ENCODE measurements at regions of chr19 and their contacts with region 1.

Region 1: GRCh38 chr19:8355631-8356402 is 8.1 kb upstream of the ANGPTL4 start:
- DNase-seq: no peak
- H3K4me3 ChIP-seq: no peak overlapping the region
- H3K27ac ChIP-seq: no peak overlapping the region
- H3K4me1 ChIP-seq: peaks cover 0 to 3% (median 0%) of the 10 kb centered on the region in 4 experiments
- H3K27me3 ChIP-seq: peaks cover 0 to 28% (median 3%) of the 10 kb centered on the region in 5 experiments

Region 2: DNA sequence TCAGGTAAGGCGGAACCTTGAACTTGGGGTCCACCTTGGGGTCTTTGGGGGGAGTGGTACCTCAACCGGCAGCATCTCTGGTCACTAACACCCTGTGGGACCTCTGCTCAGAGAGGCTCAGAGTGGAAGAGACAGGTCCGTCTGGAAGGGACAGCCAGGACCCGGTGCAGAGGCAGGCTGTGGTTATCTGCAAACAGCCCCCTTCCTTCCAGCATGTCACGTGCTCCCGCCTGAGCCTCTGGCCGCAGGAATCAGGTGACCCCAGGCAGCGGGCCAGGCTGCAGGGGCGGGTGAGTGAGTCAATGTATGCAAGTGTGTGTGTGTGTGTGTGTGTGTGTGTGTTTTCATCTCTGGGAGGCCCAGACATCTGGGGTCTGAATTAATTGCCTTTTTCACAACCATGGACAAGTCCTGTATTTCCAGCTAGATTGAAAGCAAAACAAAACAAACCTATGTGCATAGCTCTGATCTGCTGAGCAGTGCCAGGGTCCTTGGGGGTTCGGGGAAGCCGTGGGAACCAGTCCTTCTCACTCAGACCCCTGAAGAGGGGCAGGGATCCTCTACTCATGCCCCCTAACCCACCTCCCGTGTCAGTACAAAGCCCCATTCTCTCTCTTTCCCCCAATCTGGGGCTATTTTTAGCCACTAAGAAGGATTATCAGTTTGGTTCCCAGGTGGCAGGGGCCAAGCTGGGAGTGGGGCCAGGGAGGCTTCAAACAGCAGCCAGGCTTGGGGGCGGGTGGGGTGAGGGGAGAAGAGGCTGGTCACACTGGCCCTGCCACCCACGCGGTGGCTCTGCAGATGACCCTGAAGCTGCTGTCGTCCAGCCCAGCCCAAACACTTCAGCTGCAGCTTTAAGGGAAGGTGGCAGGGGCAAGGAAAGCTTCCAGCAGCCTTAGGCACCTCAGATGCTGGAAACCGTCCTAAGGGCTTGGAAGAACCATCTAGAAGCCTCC is 115.3 kb before region 1 on chr19:
- CTCF ChIA-PET with region 1: no interaction called
- POLR2A ChIA-PET with region 1: no interaction called
- DNase-seq: peak; percentile 96 to 99 (median 98)
- H3K4me3 ChIP-seq: peak overlapping the region in 4 of 7 experiments; percentile 5 to 48 (median 38)
- H3K27ac ChIP-seq: no peak overlapping the region
- H3K4me1 ChIP-seq: peaks cover 0 to 46% (median 38%) of the 10 kb centered on the region in 4 experiments
- H3K27me3 ChIP-seq: no peaks in the 10 kb centered on the region

Region 3: GRCh38 chr19:8342684-8343482 is 12.9 kb before region 1 on chr19 and contains the start of gene KANK3:
- CTCF ChIA-PET with region 1: interaction called, 20 read pairs
- POLR2A ChIA-PET with region 1: no interaction called
- DNase-seq: peak; percentile 93 to 95 (median 95)
- H3K4me3 ChIP-seq: peak within 1 kb of the TSS in 6 of 7 experiments; percentile 23 to 67 (median 53)
- H3K27ac ChIP-seq: no peak within 1 kb of the TSS
- H3K4me1 ChIP-seq: peaks cover 0 to 22% (median 14%) of the 10 kb centered on the region in 4 experiments
- H3K27me3 ChIP-seq: peaks cover 0 to 71% (median 17%) of the 10 kb centered on the region in 5 experiments

Region 4: GRCh38 chr19:8377598-8377997 is 21.8 kb after region 1 on chr19:
- CTCF ChIA-PET with region 1: interaction called, 10 read pairs
- POLR2A ChIA-PET with region 1: no interaction called
- DNase-seq: no peak
- H3K4me3 ChIP-seq: no peak overlapping the region
- H3K27ac ChIP-seq: no peak overlapping the region
- H3K4me1 ChIP-seq: no peaks in the 10 kb centered on the region
- H3K27me3 ChIP-seq: no peaks in the 10 kb centered on the region

Region 5: GRCh38 chr19:8396563-8397203 is 40.9 kb after region 1 on chr19:
- CTCF ChIA-PET with region 1: interaction called, 30 read pairs
- POLR2A ChIA-PET with region 1: interaction called, 4 read pairs
- DNase-seq: peak; percentile 70 to 78 (median 77)
- H3K4me3 ChIP-seq: no peak overlapping the region
- H3K27ac ChIP-seq: no peak overlapping the region
- H3K4me1 ChIP-seq: peaks cover 0 to 25% (median 14%) of the 10 kb centered on the region in 4 experiments
- H3K27me3 ChIP-seq: no peaks in the 10 kb centered on the region

Measured in common myeloid progenitor, CD34-positive (primary cell).